Activated CD4-positive, alpha-beta T cell treated with anti-CD3 and anti-CD28 coated beads for 36 hours (primary cell): ENCODE measurements at regions of chr10 and their contacts with region 1.

Region 1: DNA sequence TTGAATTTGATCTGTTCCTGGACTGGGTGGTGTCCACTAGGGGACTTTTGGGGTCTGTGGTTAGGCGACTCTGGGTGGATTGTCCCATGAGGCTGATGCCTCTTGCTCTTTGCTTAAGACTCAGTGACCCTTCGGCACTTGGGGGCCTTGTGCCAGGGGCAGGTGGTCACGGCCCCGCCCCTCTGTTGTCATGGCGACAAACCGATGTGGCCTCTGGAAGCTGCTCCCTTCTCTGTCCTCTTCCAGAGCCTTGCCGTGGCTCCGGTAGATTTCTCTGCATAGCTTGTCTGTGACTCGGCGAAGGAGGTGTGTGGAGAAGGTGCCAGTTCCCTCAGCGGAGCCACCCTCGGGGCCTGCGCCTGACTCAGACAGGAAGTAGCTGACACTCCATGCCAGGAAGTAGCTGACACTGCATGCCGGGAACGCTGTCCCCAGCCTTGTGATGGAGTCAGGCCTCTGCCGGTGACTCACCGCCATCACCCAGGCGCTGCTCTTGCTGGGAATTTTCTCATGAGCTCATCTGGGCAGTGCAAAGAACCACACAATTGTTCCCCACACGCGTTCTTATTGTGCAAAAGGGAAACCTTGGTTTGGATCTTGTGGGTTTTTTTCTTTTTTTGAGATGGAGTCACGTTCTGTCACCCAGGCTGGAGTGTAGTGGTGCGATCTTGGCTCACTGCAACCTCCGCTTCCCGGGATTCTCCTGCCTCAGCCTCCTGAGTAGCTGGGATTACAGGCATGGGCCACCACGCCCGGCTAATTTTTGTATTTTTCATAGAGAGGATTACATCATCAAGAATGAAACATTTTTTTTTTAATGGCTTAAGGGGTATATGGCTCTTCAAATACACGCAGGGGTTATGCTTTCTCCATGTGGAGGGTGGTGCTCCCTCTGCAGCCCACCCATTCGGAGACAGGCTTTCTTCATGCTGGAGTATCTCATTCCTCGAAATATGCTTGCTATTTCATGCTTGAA is 72.6 kb downstream of the PFKFB3 start:
- DNase-seq: peak; percentile 97
- ATAC-seq: peak; percentile 91
- H3K4me3 Mint-ChIP-seq: peak overlapping the region; percentile 70
- H3K27ac Mint-ChIP-seq: peak overlapping the region; percentile 97
- H3K4me1 Mint-ChIP-seq: peaks cover 69% of the 10 kb centered on the region
- H3K27me3 Mint-ChIP-seq: no peaks in the 10 kb centered on the region

Region 2: GRCh38 chr10:5479481-5480161 is 795.7 kb before region 1 on chr10:
- CTCF ChIA-PET with region 1: no interaction called
- POLR2A ChIA-PET with region 1: no interaction called
- intact Hi-C with region 1: no loop called
- DNase-seq: no peak
- ATAC-seq: no peak
- H3K4me3 Mint-ChIP-seq: no peak overlapping the region
- H3K27ac Mint-ChIP-seq: no peak overlapping the region
- H3K4me1 Mint-ChIP-seq: peaks cover 8% of the 10 kb centered on the region
- H3K27me3 Mint-ChIP-seq: no peaks in the 10 kb centered on the region

Region 3: DNA sequence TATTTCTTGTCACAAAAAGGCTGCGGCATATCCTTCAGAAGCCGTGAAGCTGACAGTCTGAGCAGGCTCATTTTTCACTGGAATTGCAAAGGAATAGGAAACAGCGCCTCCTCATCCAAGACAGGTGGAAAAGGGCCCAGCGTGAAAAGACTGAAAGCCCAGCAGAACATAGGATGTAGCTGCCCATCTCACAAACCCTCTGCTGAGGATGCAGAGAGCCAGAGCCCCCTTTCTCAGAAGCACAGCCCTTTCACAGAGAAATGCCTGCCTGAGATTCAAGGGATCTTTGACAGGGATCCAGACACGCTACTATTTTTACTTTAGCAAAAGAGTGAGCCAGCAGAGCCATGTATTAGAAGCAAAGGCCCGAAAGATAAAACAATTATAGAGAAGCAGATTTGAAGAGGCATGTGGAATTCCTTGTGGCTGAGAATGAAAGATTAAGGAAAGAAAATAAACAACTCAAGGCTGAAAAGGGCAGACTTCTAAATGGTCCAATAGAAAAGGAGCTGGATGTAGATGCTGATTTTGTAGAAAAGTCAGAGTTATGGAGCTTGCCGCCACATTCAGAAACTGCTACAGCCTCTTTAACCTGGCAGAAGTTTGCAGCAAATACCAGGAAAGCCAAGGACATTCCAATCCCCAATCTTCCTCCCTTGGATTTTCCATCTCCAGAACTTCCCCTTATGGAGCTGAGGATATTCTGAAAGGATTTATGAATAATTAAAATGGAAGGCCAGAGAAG is 499.0 kb before region 1 on chr10:
- CTCF ChIA-PET with region 1: no interaction called
- POLR2A ChIA-PET with region 1: no interaction called
- intact Hi-C with region 1: no loop called
- DNase-seq: no peak
- ATAC-seq: peak; percentile 17
- H3K4me3 Mint-ChIP-seq: peak overlapping the region; percentile 47
- H3K27ac Mint-ChIP-seq: peak overlapping the region; percentile 87
- H3K4me1 Mint-ChIP-seq: peaks cover 53% of the 10 kb centered on the region
- H3K27me3 Mint-ChIP-seq: no peaks in the 10 kb centered on the region

Region 4: GRCh38 chr10:5968681-5969453 is 306.4 kb before region 1 on chr10:
- CTCF ChIA-PET with region 1: no interaction called
- POLR2A ChIA-PET with region 1: no interaction called
- intact Hi-C with region 1: no loop called
- DNase-seq: no peak
- ATAC-seq: no peak
- H3K4me3 Mint-ChIP-seq: no peak overlapping the region
- H3K27ac Mint-ChIP-seq: no peak overlapping the region
- H3K4me1 Mint-ChIP-seq: peaks cover 32% of the 10 kb centered on the region
- H3K27me3 Mint-ChIP-seq: no peaks in the 10 kb centered on the region

Region 5: DNA sequence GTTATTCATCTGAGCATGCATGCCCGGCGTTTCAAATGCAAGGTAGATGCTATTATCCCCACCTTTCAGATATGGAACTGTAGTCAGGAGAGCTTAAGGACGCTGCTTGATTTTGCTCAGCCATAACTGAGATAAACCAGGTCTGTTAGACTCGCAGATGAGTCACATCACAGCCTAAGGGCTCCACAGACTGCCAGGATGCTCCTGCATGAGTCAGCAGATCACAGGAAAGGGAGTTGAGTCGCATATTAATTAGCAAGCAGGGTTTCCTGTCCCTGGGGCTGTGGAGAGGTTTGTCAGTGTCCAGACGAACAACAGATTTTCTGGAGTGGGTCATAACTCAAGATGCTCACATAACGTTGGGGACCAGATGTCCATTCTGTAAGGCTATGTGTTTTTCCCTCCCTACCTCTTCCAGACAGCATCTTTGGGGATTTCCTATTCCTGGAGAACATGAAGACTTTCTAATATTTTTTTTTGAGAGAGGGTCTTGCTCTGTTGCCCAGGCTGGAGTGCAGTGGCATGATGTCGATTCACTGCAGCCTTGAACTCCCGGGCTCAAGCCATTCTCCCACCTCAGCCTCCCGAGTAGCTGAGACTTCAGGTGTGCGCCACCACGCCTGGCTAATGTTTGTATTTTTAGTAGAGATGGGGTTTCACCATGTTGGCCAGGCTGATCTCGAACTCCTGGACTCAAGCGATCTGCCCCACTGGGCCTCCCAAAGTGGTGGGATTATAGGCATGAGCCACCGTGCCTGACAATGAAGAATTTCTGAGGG is 35.9 kb before region 1 on chr10:
- CTCF ChIA-PET with region 1: interaction called, 4 read pairs
- POLR2A ChIA-PET with region 1: interaction called, 3 read pairs
- intact Hi-C with region 1: loop called in 1 of 2 experiments (anchors 1 kb)
- DNase-seq: peak; percentile 84
- ATAC-seq: peak; percentile 92
- H3K4me3 Mint-ChIP-seq: no peak overlapping the region
- H3K27ac Mint-ChIP-seq: peak overlapping the region; percentile 45
- H3K4me1 Mint-ChIP-seq: peaks cover 23% of the 10 kb centered on the region
- H3K27me3 Mint-ChIP-seq: no peaks in the 10 kb centered on the region

Region 6: DNA sequence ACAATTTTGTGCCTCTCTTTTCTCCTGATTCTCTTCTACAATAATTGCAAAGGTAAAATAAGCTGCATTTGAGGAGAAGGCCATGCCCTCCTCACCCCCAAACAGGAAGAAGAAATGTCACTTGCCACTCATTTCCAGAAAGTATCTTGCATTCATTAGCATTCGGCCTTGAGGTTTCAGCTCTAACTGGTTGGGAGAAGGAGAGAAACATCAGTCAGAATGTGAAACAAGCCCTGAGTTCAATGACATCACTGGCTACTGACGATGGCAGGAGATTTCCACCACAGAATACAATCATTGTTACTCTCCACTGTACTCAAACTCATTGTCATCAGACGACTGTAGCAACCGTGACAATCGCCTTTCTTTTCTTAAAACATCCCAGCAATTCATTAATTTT is 232.0 kb after region 1 on chr10:
- CTCF ChIA-PET with region 1: no interaction called
- POLR2A ChIA-PET with region 1: no interaction called
- intact Hi-C with region 1: loop called (anchors 10 kb)
- DNase-seq: peak; percentile 72
- ATAC-seq: peak; percentile 93
- H3K4me3 Mint-ChIP-seq: peak overlapping the region; percentile 45
- H3K27ac Mint-ChIP-seq: peak overlapping the region; percentile 94
- H3K4me1 Mint-ChIP-seq: peaks cover 76% of the 10 kb centered on the region
- H3K27me3 Mint-ChIP-seq: no peaks in the 10 kb centered on the region

Region 7: GRCh38 chr10:6607778-6608177 is 332.5 kb after region 1 on chr10:
- CTCF ChIA-PET with region 1: no interaction called
- POLR2A ChIA-PET with region 1: no interaction called
- intact Hi-C with region 1: loop called in 1 of 2 experiments (anchors 10 kb)
- DNase-seq: no peak
- ATAC-seq: no peak
- H3K4me3 Mint-ChIP-seq: no peak overlapping the region
- H3K27ac Mint-ChIP-seq: peak overlapping the region; percentile 89
- H3K4me1 Mint-ChIP-seq: peaks cover 65% of the 10 kb centered on the region
- H3K27me3 Mint-ChIP-seq: no peaks in the 10 kb centered on the region

Region 8: GRCh38 chr10:6755781-6756460 is 480.6 kb after region 1 on chr10:
- CTCF ChIA-PET with region 1: no interaction called
- POLR2A ChIA-PET with region 1: no interaction called
- intact Hi-C with region 1: no loop called
- DNase-seq: no peak
- ATAC-seq: no peak
- H3K4me3 Mint-ChIP-seq: no peak overlapping the region
- H3K27ac Mint-ChIP-seq: no peak overlapping the region
- H3K4me1 Mint-ChIP-seq: no peaks in the 10 kb centered on the region
- H3K27me3 Mint-ChIP-seq: peaks cover 37% of the 10 kb centered on the region